ENCODE measurements at regions of chr15 and their contacts with region 1.

Region 1: GRCh38 chr15:78437762-78438302 is at the start of gene IREB2:
- DNase-seq: peak; percentile 99
- ATAC-seq: peak; percentile 88
- H3K4me3 Mint-ChIP-seq: peak within 1 kb of the TSS; percentile 87
- H3K27ac Mint-ChIP-seq: peak within 1 kb of the TSS; percentile 99
- H3K4me1 Mint-ChIP-seq: peaks cover 35% of the 10 kb centered on the region
- H3K27me3 Mint-ChIP-seq: no peaks in the 10 kb centered on the region
- total RNA-seq, gene IREB2: 50.8 to 66.5 TPM

Region 2: GRCh38 chr15:78034495-78035191 is 403.2 kb before region 1 on chr15:
- CTCF ChIA-PET with region 1: no interaction called
- POLR2A ChIA-PET with region 1: no interaction called
- intact Hi-C with region 1: loop called in 1 of 2 experiments (anchors 5 kb)
- DNase-seq: peak; percentile 95
- ATAC-seq: peak; percentile 88
- H3K4me3 Mint-ChIP-seq: peak overlapping the region; percentile 50
- H3K27ac Mint-ChIP-seq: peak overlapping the region; percentile 86
- H3K4me1 Mint-ChIP-seq: peaks cover 89% of the 10 kb centered on the region
- H3K27me3 Mint-ChIP-seq: no peaks in the 10 kb centered on the region

Region 3: GRCh38 chr15:78149068-78149804 is 288.6 kb before region 1 on chr15 and contains the start of gene IDH3A:
- CTCF ChIA-PET with region 1: no interaction called
- POLR2A ChIA-PET with region 1: no interaction called
- intact Hi-C with region 1: loop called in 1 of 2 experiments (anchors 1 kb)
- DNase-seq: peak; percentile 100
- ATAC-seq: peak; percentile 94
- H3K4me3 Mint-ChIP-seq: peak within 1 kb of the TSS; percentile 95
- H3K27ac Mint-ChIP-seq: peak within 1 kb of the TSS; percentile 96
- H3K4me1 Mint-ChIP-seq: peaks cover 41% of the 10 kb centered on the region
- H3K27me3 Mint-ChIP-seq: no peaks in the 10 kb centered on the region
- total RNA-seq, gene IDH3A: 129 to 135 TPM

Region 4: GRCh38 chr15:78407608-78408354 is 30.1 kb before region 1 on chr15:
- CTCF ChIA-PET with region 1: no interaction called
- POLR2A ChIA-PET with region 1: no interaction called
- intact Hi-C with region 1: no loop called
- DNase-seq: no peak
- ATAC-seq: no peak
- H3K4me3 Mint-ChIP-seq: no peak overlapping the region
- H3K27ac Mint-ChIP-seq: no peak overlapping the region
- H3K4me1 Mint-ChIP-seq: no peaks in the 10 kb centered on the region
- H3K27me3 Mint-ChIP-seq: peaks cover 2% of the 10 kb centered on the region

Region 5: DNA sequence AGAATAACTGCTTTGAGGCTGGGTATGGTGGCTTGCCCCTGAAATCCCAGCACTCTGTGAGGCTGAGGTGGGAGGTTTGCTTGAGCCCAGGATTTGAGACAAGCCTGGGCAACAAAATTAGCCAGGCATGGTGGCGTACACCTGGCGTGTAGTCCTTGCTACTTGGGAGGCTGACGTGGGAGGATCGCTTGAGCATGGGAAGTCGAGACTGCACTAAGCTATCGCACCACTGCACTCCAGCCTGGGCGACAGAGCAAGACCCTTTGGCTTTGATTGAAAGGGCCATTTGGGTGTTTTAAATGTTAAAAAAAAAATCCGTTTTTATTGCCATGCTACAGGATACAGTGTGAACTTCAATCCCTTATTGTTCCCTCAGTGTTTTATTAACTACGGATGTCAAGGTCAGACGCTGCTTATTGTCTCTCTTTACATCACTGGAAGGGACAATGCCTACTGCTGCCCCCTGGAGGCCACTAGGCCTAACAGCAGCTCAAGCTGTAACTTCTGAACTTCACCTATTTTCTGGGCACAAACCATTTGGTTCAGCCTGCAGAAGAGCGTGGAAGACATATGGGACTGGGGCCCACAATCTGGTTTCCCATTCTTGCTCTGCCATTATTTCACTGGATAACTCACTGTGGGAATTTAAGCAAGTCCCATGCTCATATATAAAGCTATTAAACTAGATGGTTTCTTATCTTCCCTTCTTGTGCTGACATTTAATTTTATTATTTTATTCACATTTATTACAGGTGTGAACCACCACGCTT is 15.1 kb before region 1 on chr15:
- CTCF ChIA-PET with region 1: interaction called, 15 read pairs
- POLR2A ChIA-PET with region 1: interaction called, 9 read pairs
- intact Hi-C with region 1: no loop called
- DNase-seq: peak; percentile 80
- ATAC-seq: peak; percentile 83
- H3K4me3 Mint-ChIP-seq: no peak overlapping the region
- H3K27ac Mint-ChIP-seq: no peak overlapping the region
- H3K4me1 Mint-ChIP-seq: peaks cover 18% of the 10 kb centered on the region
- H3K27me3 Mint-ChIP-seq: no peaks in the 10 kb centered on the region

Region 6: DNA sequence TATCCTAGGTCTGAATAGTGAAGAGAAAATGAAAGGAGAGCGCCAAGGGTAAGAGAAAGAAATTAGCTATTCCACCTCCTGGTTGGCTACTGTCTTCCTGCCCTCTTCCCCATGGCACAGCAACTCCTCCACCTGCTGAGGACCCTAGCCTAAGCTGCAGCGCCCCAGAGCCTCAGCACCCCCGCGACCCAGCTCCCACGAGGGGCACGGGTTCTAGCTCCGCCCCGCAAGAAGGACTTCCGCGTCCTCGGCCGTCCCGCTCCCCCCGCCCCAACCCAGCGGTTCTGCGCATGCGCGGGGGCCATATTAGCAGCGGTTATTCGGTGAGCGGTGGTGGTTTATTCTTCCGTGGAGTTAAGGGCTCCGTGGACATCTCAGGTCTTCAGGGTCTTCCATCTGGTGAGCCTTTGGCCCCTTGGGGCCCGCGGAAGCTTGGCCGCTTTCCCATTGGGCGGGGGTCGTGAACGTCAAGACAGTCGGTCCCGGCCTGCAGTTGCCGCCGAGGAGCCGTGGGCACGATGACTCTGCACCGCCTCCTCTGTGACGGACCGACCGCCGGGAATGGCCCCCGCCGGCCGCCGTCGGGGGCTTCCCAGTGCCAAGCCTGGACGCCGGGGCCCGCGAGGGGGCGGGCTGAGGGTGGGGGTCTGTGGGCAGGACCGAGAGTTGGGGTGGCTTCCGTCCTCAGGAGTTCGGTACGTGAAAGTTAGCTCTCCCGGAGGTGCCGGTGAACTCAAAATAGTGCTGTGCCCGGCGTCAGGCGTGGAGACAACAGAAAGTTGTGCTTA is 102.5 kb after region 1 on chr15 and contains the start of gene PSMA4:
- CTCF ChIA-PET with region 1: interaction called, 8 read pairs
- POLR2A ChIA-PET with region 1: interaction called, 12 read pairs
- intact Hi-C with region 1: loop called (anchors 1 kb)
- DNase-seq: peak; percentile 96
- ATAC-seq: peak; percentile 86
- H3K4me3 Mint-ChIP-seq: peak within 1 kb of the TSS; percentile 91
- H3K27ac Mint-ChIP-seq: peak within 1 kb of the TSS; percentile 98
- H3K4me1 Mint-ChIP-seq: peaks cover 27% of the 10 kb centered on the region
- H3K27me3 Mint-ChIP-seq: no peaks in the 10 kb centered on the region
- total RNA-seq, gene PSMA4: 273 to 312 TPM

Region 7: GRCh38 chr15:78872972-78873792 is 435.4 kb after region 1 on chr15:
- CTCF ChIA-PET with region 1: no interaction called
- POLR2A ChIA-PET with region 1: interaction called, 7 read pairs
- intact Hi-C with region 1: loop called (anchors 1 to 5 kb)
- DNase-seq: peak; percentile 96
- ATAC-seq: peak; percentile 80
- H3K4me3 Mint-ChIP-seq: peak overlapping the region; percentile 99
- H3K27ac Mint-ChIP-seq: peak overlapping the region; percentile 99
- H3K4me1 Mint-ChIP-seq: peaks cover 34% of the 10 kb centered on the region
- H3K27me3 Mint-ChIP-seq: no peaks in the 10 kb centered on the region

Measured in activated CD4-positive, alpha-beta T cell treated with anti-CD3 and anti-CD28 coated beads for 36 hours (primary cell).